Right lobe of liver (tissue), 6 donors: ENCODE measurements at regions of chr2 and their contacts with region 1.

Region 1: DNA sequence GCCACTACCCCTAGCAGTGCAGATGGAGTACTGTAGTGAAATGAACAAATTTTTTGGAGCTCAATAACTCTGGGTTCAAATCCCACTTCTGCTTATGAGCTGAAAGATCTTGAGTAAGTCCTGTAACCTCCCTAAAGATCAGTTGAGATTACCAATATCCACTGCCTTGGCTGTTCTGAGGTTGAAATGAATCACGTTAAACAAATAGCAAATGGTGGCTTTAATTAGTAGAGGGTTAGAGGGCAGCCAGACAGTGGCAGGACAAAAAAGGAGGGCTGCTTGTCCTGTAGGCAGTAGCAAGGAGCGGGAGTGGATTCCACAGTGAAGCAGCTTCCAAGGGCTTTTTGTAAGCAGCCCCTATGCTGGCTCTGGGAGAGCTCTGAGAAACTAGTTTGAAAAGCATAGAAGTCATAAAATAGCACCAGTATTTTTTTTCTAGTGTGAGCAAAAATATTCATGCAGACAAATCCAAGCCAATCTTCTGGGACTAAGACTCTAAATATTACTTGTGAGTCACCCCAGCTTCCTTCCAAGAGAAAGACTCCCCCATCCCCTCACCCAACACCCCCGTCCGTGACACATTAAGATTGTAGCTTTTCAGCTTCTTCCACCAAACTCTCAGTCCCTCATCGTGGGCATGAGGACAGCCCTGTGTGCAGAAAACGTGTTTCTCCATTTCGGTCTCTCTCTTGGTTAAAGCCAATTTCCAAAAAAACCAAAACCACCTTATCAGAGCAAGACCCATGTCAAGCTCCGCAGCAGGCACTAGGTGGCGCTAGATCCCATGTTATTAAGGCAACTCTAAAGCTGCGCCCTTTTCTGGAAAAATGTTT is 123.5 kb upstream of the LGALSL start:
- DNase-seq: peak; percentile 68 to 80 (median 73)
- ATAC-seq: peak; percentile 78 to 81 (median 80)
- H3K4me3 ChIP-seq: no peak overlapping the region
- H3K27ac ChIP-seq: no peak overlapping the region
- H3K4me1 ChIP-seq: no peaks in the 10 kb centered on the region
- H3K27me3 ChIP-seq: no peaks in the 10 kb centered on the region
- CTCF ChIP-seq: peak; percentile 87 to 97 (median 92)
- POLR2A ChIP-seq: no peak

Region 2: GRCh38 chr2:64052468-64053241 is 277.8 kb before region 1 on chr2:
- intact Hi-C with region 1: loop called in 1 of 2 experiments (anchors 10 kb)
- DNase-seq: no peak
- ATAC-seq: peak; percentile 34 to 71 (median 58)
- H3K4me3 ChIP-seq: no peak overlapping the region
- H3K27ac ChIP-seq: no peak overlapping the region
- H3K4me1 ChIP-seq: no peaks in the 10 kb centered on the region
- H3K27me3 ChIP-seq: no peaks in the 10 kb centered on the region
- CTCF ChIP-seq: no peak
- POLR2A ChIP-seq: no peak

Region 3: GRCh38 chr2:64488050-64488974 is 157.8 kb after region 1 on chr2:
- intact Hi-C with region 1: loop called (anchors 5 kb)
- DNase-seq: peak; percentile 66 to 75 (median 72)
- ATAC-seq: peak; percentile 79 to 92 (median 90)
- H3K4me3 ChIP-seq: no peak overlapping the region
- H3K27ac ChIP-seq: no peak overlapping the region
- H3K4me1 ChIP-seq: no peaks in the 10 kb centered on the region
- H3K27me3 ChIP-seq: no peaks in the 10 kb centered on the region
- CTCF ChIP-seq: peak; percentile 85 to 99 (median 98)
- POLR2A ChIP-seq: no peak